ENCODE measurements at regions of chr7 and their contacts with region 1.

Region 1: DNA sequence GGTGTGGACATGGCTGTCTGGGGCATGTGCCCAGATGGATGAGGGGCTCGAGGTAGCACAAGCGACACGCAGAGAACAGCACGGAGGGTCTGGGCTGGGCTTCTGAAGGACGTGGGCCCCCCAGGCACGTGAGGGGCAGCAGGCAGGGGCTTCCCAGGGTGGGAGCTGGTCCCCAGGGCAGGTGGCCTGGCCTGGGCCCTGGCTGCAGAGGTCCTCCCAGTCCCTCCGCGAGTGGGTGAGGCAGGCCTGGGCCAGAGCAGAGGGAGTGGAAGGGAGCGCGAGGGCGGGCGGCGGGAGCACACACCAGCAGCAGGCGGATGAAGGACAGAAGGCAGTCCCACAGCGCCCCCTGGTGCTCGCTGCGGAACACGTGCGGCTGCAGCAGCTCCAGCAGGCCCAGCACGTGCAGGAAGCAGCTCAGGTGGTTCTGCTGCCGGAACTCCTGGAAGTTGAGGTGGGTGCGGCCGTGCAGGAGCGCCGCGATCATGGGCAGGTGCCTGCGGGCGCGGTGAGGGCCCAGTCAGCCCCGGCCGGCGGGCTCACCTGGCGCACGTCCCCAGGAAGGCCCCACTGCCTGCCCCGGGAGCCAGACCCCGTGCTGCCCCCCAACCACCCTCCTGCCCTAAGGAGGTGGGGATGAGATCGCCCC is 14.7 kb upstream of the MICALL2 start:
- DNase-seq: peak; percentile 84 to 88 (median 86)
- ATAC-seq: peak; percentile 72 to 92 (median 79)
- H3K4me3 ChIP-seq: no peak overlapping the region
- H3K27ac ChIP-seq: no peak overlapping the region
- H3K4me1 ChIP-seq: no peaks in the 10 kb centered on the region
- H3K27me3 ChIP-seq: no peaks in the 10 kb centered on the region
- CTCF ChIP-seq: peak; percentile 88 to 92 (median 90)
- POLR2A ChIP-seq: no peak

Region 2: DNA sequence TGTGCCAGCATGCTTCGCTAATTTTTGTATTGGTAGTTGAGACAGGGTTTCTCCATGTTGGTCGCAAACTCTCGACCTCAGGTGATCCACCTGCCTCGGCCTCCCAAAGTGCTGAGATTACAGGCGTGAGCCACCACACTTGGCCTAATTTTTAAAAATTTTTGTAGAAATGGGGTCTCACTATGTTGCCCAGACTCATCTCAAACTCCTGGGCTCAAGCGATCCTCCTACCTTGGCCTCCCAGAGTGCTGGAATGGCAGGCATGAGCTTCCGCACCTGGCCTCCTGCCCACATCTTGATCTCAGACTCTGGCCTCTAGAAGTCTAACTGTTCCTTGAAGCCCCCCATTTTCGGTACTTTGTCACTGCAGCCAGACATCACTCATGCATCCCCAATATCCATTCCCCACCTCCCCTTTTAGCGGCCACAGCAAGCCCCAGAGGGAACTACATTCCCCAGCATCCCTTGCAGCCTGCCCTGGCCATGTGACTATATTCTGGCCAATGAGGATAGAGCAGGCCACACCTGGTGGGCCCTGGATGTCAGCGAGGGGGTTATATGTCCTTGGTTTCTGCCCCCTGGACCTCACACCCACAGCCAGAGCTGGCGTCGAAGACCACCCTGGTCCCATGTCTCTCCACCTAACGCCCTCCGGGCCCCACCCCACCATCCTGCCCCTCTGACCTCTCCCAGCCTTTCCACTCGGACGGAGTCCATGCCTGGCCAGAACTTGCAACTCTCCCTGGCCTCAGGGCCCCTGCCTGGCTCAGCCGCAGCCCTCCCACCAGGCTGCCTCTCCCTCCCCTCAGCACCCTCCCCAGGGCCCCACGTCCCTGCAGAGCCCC is 48.5 kb before region 1 on chr7:
- intact Hi-C with region 1: loop called in 1 of 2 experiments (anchors 10 kb)
- DNase-seq: no peak
- ATAC-seq: peak in 1 of 4 donors; percentile 24
- H3K4me3 ChIP-seq: no peak overlapping the region
- H3K27ac ChIP-seq: no peak overlapping the region
- H3K4me1 ChIP-seq: no peaks in the 10 kb centered on the region
- H3K27me3 ChIP-seq: no peaks in the 10 kb centered on the region
- CTCF ChIP-seq: no peak
- POLR2A ChIP-seq: no peak